Naive thymus-derived CD4-positive, alpha-beta T cell (primary cell): ENCODE measurements at regions of chr17 and their contacts with region 1.

Region 1: GRCh38 chr17:59619293-59620063 is at the start of gene CLTC:
- DNase-seq: peak; percentile 89 to 96 (median 95)
- ATAC-seq: peak; percentile 91
- H3K4me3 ChIP-seq: peak within 1 kb of the TSS; percentile 80
- H3K4me3 Mint-ChIP-seq: peak within 1 kb of the TSS; percentile 92 to 100 (median 96)
- H3K27ac ChIP-seq: peak within 1 kb of the TSS; percentile 94
- H3K27ac Mint-ChIP-seq: peak within 1 kb of the TSS; percentile 94 to 100 (median 99)
- H3K4me1 ChIP-seq: peaks cover 12 to 32% of the 10 kb centered on the region in 2 donors
- H3K4me1 Mint-ChIP-seq: peaks cover 23 to 60% (median 51%) of the 10 kb centered on the region in 7 donors
- H3K27me3 ChIP-seq: no peaks in the 10 kb centered on the region
- H3K27me3 Mint-ChIP-seq: peaks cover 0 to 3% (median 0%) of the 10 kb centered on the region in 5 donors
- total RNA-seq, gene CLTC: 67.1 to 174 (median 88.4) TPM

Region 2: DNA sequence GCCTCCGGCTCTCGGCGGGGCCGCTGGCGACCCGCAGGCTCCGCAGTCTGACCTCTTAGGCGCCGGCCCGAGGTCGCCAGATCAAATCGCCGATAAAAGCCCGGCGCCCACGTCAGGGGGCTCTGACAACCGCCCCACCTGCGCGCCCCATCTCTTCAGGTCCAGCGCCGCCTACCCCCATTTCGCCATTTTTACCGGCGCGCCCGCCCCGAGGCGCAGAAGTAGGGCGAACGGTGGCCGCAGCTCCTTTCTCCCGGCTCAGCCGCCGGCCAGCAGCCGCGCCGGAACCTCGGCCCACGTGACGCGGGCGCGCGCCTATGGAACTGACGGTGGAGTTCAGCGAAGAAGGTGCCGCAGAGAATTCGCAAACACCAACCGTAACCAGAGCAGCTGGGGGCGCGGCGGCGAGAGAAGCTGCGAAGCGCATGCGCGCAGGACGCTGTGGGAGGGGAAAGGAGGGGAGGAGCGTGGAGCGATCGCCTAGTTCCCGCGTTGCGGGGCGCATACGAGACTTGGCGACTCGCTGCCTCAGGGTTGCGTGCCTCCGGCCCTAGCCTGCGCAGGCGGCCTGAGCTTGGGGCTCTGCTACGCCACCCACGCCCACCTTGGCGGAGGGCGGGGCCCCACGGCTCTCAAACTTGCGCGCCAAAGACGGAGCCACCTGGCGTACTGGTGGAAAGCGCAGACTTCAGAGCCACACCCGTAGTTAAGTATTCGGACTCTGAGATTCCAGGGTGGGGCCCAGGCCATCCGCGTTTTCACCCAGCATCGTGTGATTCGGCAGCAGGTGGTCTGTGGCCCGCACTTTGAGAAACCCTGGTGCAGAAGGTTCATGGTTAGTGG is 512.8 kb before region 1 on chr17 and contains the start of gene TRIM37:
- CTCF ChIA-PET with region 1: no interaction called
- POLR2A ChIA-PET with region 1: no interaction called
- intact Hi-C with region 1: loop called (anchors 1 kb)
- DNase-seq: peak; percentile 96 to 100 (median 99)
- ATAC-seq: peak; percentile 98
- H3K4me3 ChIP-seq: peak within 1 kb of the TSS; percentile 69
- H3K4me3 Mint-ChIP-seq: peak within 1 kb of the TSS; percentile 80 to 97 (median 94)
- H3K27ac ChIP-seq: peak within 1 kb of the TSS; percentile 83
- H3K27ac Mint-ChIP-seq: peak within 1 kb of the TSS; percentile 63 to 98 (median 90)
- H3K4me1 ChIP-seq: peaks cover 11 to 26% of the 10 kb centered on the region in 2 donors
- H3K4me1 Mint-ChIP-seq: peaks cover 15 to 57% (median 39%) of the 10 kb centered on the region in 7 donors
- H3K27me3 ChIP-seq: no peaks in the 10 kb centered on the region
- H3K27me3 Mint-ChIP-seq: no peaks in the 10 kb centered on the region
- total RNA-seq, gene TRIM37: 13.1 to 25.2 (median 22.4) TPM

Region 3: GRCh38 chr17:59565171-59565969 is 54.1 kb before region 1 on chr17 and contains the start of gene DHX40:
- CTCF ChIA-PET with region 1: no interaction called
- POLR2A ChIA-PET with region 1: interaction called, 14 read pairs
- intact Hi-C with region 1: loop called (anchors 1 kb)
- DNase-seq: peak; percentile 80 to 95 (median 92)
- ATAC-seq: peak; percentile 97
- H3K4me3 ChIP-seq: peak within 1 kb of the TSS; percentile 92
- H3K4me3 Mint-ChIP-seq: peak within 1 kb of the TSS; percentile 97 to 100 (median 100)
- H3K27ac ChIP-seq: peak within 1 kb of the TSS; percentile 95
- H3K27ac Mint-ChIP-seq: peak within 1 kb of the TSS; percentile 98 to 100 (median 100)
- H3K4me1 ChIP-seq: peaks cover 10 to 14% of the 10 kb centered on the region in 2 donors
- H3K4me1 Mint-ChIP-seq: peaks cover 0 to 30% (median 23%) of the 10 kb centered on the region in 7 donors
- H3K27me3 ChIP-seq: no peaks in the 10 kb centered on the region
- H3K27me3 Mint-ChIP-seq: peaks cover 0 to 3% (median 0%) of the 10 kb centered on the region in 5 donors
- total RNA-seq, gene DHX40: 21.3 to 44.9 (median 29.4) TPM

Region 4: DNA sequence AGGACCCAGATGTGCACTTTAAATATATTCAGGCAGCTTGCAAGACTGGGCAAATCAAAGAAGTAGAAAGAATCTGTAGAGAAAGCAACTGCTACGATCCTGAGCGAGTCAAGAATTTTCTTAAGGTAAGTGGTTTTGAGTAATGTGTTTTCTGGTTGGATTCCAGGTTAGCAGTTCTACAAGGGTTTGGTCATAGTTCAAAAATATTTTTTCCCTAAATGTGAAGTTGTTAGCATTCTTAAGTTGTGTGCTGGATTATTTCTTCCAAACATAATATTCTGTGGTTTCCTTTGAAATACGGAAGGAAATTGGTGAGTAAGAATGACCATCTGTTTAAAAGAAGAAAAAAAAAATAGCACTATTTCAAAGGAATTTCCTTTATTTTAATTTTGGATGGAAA is 49.3 kb after region 1 on chr17:
- CTCF ChIA-PET with region 1: no interaction called
- POLR2A ChIA-PET with region 1: interaction called, 5 read pairs
- intact Hi-C with region 1: loop called in 1 of 2 experiments (anchors 2 kb)
- DNase-seq: no peak
- ATAC-seq: no peak
- H3K4me3 ChIP-seq: no peak overlapping the region
- H3K4me3 Mint-ChIP-seq: no peak overlapping the region
- H3K27ac ChIP-seq: no peak overlapping the region
- H3K27ac Mint-ChIP-seq: peak overlapping the region in 7 of 9 donors; percentile 10 to 68 (median 43)
- H3K4me1 ChIP-seq: no peaks in the 10 kb centered on the region
- H3K4me1 Mint-ChIP-seq: peaks cover 4 to 28% (median 16%) of the 10 kb centered on the region in 7 donors
- H3K27me3 ChIP-seq: no peaks in the 10 kb centered on the region
- H3K27me3 Mint-ChIP-seq: no peaks in the 10 kb centered on the region

Region 5: DNA sequence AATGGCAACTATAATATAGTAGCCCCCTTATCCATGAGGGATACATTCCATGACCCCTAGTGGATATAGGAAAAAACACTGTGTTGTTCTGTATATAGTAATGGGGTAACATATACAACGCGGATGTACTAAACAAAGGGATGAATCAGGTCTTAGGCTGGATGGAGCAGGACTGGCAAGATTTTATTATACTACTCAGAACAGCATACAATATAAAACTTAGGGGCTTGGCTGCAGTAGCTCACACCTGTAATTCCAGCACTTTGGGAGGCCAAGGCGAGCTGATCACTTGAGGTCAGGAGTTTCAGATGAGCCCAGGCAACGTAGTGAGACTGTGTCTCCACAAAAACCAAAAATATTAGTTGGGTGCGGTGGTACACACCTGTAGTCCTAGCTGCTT is 114.7 kb after region 1 on chr17:
- CTCF ChIA-PET with region 1: no interaction called
- POLR2A ChIA-PET with region 1: no interaction called
- intact Hi-C with region 1: no loop called
- DNase-seq: no peak
- ATAC-seq: no peak
- H3K4me3 ChIP-seq: no peak overlapping the region
- H3K4me3 Mint-ChIP-seq: no peak overlapping the region
- H3K27ac ChIP-seq: no peak overlapping the region
- H3K27ac Mint-ChIP-seq: no peak overlapping the region
- H3K4me1 ChIP-seq: peaks cover 0 to 8% of the 10 kb centered on the region in 2 donors
- H3K4me1 Mint-ChIP-seq: peaks cover 0 to 10% (median 8%) of the 10 kb centered on the region in 7 donors
- H3K27me3 ChIP-seq: no peaks in the 10 kb centered on the region
- H3K27me3 Mint-ChIP-seq: no peaks in the 10 kb centered on the region

Region 6: DNA sequence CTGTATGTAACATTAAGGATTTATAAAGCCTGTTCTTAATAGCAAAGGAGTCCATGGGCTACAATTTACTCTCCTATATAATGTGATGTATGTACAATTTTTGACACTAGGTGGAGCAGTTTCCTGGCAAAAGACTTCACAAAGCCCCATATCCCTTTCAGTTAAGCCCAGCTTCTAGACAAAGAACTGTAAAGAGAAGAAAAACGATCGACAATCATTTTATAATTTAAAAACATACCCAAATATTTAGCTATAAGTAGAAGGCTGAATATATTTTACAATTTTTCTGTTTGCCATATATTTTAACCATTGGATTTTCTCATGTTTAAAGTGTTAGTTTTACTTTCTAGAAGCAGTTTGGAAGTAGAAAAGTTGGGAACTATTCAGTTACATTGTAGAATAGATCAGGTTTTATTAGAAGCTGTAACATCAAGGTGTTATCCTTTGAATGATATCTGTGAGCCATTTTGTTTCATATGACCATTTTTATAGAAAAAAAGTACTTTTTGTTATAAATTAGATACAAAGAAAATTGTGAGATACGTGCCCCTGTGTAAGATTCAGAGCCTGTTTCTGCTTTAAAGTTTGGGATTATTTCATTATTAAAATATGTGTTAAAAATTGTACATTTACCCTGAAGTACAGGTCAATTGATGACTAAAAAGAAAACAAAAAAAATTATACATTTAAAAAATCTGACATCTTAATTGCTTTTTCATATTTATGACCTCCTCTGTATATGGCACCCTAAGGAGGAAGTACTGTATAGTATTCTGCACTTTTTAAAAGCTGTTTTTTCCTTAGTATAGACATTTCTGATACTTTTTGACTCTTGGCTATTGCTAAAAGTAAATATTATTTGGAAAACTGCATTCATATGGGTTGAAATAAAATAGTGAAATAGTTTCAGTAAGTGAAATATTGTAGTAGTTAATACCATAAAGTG is 134.3 kb after region 1 on chr17:
- CTCF ChIA-PET with region 1: no interaction called
- POLR2A ChIA-PET with region 1: no interaction called
- intact Hi-C with region 1: no loop called
- DNase-seq: peak in 7 of 9 donors; percentile 48 to 79 (median 71)
- ATAC-seq: peak; percentile 98
- H3K4me3 ChIP-seq: peak overlapping the region; percentile 15
- H3K4me3 Mint-ChIP-seq: peak overlapping the region in 9 of 10 donors; percentile 16 to 75 (median 53)
- H3K27ac ChIP-seq: peak overlapping the region; percentile 47
- H3K27ac Mint-ChIP-seq: peak overlapping the region; percentile 36 to 94 (median 76)
- H3K4me1 ChIP-seq: peaks cover 0 to 5% of the 10 kb centered on the region in 2 donors
- H3K4me1 Mint-ChIP-seq: peaks cover 9 to 63% (median 24%) of the 10 kb centered on the region in 7 donors
- H3K27me3 ChIP-seq: no peaks in the 10 kb centered on the region
- H3K27me3 Mint-ChIP-seq: no peaks in the 10 kb centered on the region

Region 7: DNA sequence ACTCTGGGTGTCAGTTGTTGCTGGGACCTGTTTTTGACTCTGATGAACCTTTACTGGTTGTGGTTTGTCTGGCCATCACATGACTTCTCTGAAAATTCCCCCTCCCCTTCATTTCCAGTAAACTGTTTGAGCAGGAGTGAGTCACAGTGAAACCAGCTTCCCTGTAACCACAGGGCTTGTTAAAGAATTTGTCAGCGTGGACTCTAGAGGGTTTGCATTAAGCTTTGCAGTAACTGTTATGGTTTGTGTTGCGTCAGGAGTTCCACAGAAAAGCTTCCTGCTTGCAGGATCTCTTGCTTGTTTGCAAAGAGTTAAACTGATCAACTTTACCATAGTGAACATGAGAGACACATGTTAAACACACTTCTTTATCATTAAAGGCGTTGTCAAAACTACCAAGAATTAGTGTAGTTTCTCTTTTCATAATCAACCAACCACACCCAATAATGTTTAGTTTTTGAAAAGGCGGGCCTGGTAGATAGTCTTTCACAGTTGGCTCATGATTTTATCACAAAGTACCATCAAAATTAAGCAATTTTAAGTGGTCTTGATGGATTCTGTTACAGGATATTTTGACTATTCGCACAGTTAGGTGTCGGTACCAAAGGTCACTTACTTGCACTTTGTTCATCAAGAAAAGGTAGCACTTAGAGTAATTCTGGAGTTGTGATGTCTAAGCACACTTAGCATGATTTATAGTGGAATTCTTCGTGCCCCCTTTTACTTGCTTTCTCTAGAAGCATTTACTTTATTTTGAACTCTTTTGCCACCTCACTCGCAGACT is 167.2 kb after region 1 on chr17:
- CTCF ChIA-PET with region 1: no interaction called
- POLR2A ChIA-PET with region 1: no interaction called
- intact Hi-C with region 1: loop called in 1 of 2 experiments (anchors 2 kb)
- DNase-seq: peak in 8 of 9 donors; percentile 71 to 92 (median 86)
- ATAC-seq: peak; percentile 95
- H3K4me3 ChIP-seq: peak overlapping the region; percentile 29
- H3K4me3 Mint-ChIP-seq: peak overlapping the region; percentile 68 to 89 (median 82)
- H3K27ac ChIP-seq: peak overlapping the region; percentile 84
- H3K27ac Mint-ChIP-seq: peak overlapping the region; percentile 90 to 98 (median 96)
- H3K4me1 ChIP-seq: peaks cover 39% of the 10 kb centered on the region in 2 donors
- H3K4me1 Mint-ChIP-seq: peaks cover 21 to 62% (median 51%) of the 10 kb centered on the region in 7 donors
- H3K27me3 ChIP-seq: no peaks in the 10 kb centered on the region
- H3K27me3 Mint-ChIP-seq: peaks cover 0 to 3% (median 0%) of the 10 kb centered on the region in 5 donors

Region 8: DNA sequence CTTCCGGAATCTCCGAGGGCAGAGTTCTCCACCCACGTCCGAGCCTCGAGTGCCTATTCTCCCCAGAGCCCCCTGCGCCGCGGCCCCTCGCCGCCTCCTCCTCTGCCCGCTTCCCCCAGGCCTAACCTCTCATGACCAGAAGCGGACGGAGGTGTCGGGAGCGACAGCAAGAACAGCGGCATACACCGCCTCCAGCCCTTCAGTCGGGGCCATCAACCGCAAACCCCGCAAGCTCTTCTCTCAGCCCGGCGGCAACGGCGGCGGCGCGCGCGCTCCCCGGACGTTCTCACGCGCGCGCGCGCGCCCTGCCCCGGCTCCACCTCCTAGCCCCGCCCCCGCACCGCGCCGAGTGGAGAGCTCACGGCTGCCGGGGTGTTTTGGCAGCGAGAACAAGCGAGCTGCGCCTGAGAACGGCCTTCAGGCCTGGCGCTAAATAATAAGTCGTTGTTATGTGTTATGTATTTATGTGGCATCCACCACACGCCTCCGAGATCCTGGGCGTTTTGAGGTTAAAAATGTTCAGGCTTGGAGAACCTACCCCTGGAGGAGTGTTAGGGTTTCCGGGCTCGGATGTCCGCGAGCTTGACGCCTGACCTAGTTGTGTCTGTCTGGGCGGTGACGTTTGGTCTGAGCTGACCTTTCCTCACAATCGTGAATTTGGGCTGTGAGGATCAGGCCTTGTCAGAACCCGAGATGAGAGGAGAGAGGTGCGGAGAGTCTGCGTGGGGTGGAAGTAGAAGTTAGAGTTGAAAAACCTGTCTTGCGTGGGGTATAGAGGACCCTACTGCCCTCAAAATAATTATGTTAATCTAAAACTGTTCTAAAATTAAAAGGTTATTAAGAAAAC is 345.2 kb after region 1 on chr17 and contains the start of gene RNFT1:
- CTCF ChIA-PET with region 1: no interaction called
- POLR2A ChIA-PET with region 1: interaction called, 3 read pairs
- intact Hi-C with region 1: loop called in 1 of 2 experiments (anchors 5 kb)
- DNase-seq: peak; percentile 78 to 97 (median 88)
- ATAC-seq: peak; percentile 97
- H3K4me3 ChIP-seq: peak within 1 kb of the TSS; percentile 92
- H3K4me3 Mint-ChIP-seq: peak within 1 kb of the TSS; percentile 86 to 99 (median 94)
- H3K27ac ChIP-seq: peak within 1 kb of the TSS; percentile 84
- H3K27ac Mint-ChIP-seq: peak within 1 kb of the TSS; percentile 88 to 99 (median 94)
- H3K4me1 ChIP-seq: peaks cover 16 to 18% of the 10 kb centered on the region in 2 donors
- H3K4me1 Mint-ChIP-seq: peaks cover 16 to 32% (median 23%) of the 10 kb centered on the region in 7 donors
- H3K27me3 ChIP-seq: no peaks in the 10 kb centered on the region
- H3K27me3 Mint-ChIP-seq: peaks cover 0 to 5% (median 0%) of the 10 kb centered on the region in 5 donors
- total RNA-seq, gene RNFT1: 22.8 to 45.8 (median 33.1) TPM

Region 9: GRCh38 chr17:60677308-60678124 is 1058.0 kb after region 1 on chr17 and contains the start of gene BCAS3:
- CTCF ChIA-PET with region 1: no interaction called
- POLR2A ChIA-PET with region 1: no interaction called
- intact Hi-C with region 1: loop called in 1 of 2 experiments (anchors 10 kb)
- DNase-seq: peak; percentile 82 to 98 (median 97)
- ATAC-seq: peak; percentile 97
- H3K4me3 ChIP-seq: peak within 1 kb of the TSS; percentile 85
- H3K4me3 Mint-ChIP-seq: peak within 1 kb of the TSS; percentile 95 to 99 (median 98)
- H3K27ac ChIP-seq: peak within 1 kb of the TSS; percentile 84
- H3K27ac Mint-ChIP-seq: peak within 1 kb of the TSS; percentile 91 to 99 (median 96)
- H3K4me1 ChIP-seq: peaks cover 0 to 5% of the 10 kb centered on the region in 2 donors
- H3K4me1 Mint-ChIP-seq: peaks cover 10 to 30% (median 25%) of the 10 kb centered on the region in 7 donors
- H3K27me3 ChIP-seq: no peaks in the 10 kb centered on the region
- H3K27me3 Mint-ChIP-seq: no peaks in the 10 kb centered on the region
- total RNA-seq, gene BCAS3: 18.4 to 57.8 (median 42.3) TPM